Naive thymus-derived CD4-positive, alpha-beta T cell (primary cell): ENCODE measurements at regions of chr10 and their contacts with region 1.

Region 1: DNA sequence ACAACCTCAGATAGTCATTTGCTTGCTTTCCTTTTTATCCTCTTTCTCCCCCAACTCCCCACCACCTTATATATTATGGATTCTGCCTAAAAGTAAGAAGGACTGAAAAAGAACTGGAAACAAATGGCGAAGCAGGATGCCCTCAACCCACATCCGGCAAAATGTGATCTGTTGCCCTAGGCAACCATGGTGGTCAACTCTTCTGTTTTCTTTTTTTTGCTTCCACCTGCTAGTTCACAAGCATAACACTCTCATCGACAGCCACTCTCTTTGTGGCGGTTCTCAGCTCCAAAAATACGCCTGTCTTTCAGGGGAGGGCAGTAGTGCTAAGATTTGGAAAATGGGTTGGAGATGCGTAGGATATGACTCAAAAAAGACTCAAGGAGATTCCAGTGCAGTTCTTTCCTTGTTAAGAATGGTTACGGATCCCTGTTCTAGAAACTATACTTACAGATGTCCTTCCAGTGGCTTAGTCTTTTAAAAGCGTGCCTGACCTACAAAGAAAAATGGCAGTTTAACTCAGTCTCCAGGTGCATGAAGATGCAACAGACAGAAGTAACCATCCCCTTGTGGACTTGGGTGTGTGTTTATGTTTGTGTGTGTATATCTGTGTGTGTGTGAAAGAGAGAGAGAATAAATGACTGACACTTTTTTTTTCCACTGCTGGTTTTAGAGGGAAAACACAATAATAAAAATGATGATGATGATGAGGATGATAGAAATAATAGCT is 10.7 kb downstream of the APBB1IP start:
- DNase-seq: peak; percentile 23 to 91 (median 89)
- ATAC-seq: peak; percentile 89
- H3K4me3 ChIP-seq: peak overlapping the region; percentile 31
- H3K4me3 Mint-ChIP-seq: peak overlapping the region; percentile 71 to 92 (median 84)
- H3K27ac ChIP-seq: peak overlapping the region; percentile 76
- H3K27ac Mint-ChIP-seq: peak overlapping the region; percentile 93 to 99 (median 97)
- H3K4me1 ChIP-seq: peaks cover 57 to 70% of the 10 kb centered on the region in 2 donors
- H3K4me1 Mint-ChIP-seq: peaks cover 60 to 97% (median 90%) of the 10 kb centered on the region in 7 donors
- H3K27me3 ChIP-seq: no peaks in the 10 kb centered on the region
- H3K27me3 Mint-ChIP-seq: no peaks in the 10 kb centered on the region

Region 2: DNA sequence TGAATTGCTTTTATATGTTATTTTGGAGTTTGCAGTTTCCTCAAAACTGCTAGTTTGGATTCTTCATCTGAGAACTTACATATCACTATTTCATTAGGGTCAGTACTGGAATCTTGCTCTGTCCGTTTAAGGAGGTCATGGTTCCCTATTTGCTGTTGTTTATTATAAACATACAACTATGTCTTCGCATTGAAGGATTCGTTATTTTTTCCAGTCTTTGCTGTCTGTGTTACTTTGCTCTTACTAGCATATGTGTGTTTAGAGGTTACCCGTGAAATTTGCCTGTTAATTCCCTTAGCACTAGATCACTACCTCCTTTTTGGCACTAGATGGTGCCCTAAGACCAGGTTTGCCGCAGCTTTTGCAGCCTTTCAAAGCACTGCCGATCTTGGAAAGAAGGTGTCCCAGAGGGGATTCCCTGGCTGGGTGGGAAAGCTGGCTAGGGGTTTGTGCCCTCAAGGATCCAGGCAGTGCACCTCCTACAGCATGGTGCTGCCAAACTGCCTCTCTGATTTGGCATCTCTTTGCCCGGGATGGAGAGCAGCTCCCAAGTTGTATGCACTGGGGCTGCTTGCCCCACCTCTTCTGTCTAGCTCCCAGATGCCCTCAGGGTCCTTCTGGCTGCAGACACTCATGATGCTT is 113.8 kb before region 1 on chr10:
- CTCF ChIA-PET with region 1: no interaction called
- POLR2A ChIA-PET with region 1: interaction called, 3 read pairs
- intact Hi-C with region 1: loop called in 1 of 2 experiments (anchors 1 kb)
- DNase-seq: peak; percentile 46 to 78 (median 70)
- ATAC-seq: peak; percentile 93
- H3K4me3 ChIP-seq: peak overlapping the region; percentile 43
- H3K4me3 Mint-ChIP-seq: peak overlapping the region; percentile 53 to 92 (median 86)
- H3K27ac ChIP-seq: no peak overlapping the region
- H3K27ac Mint-ChIP-seq: peak overlapping the region in 7 of 9 donors; percentile 2 to 83 (median 60)
- H3K4me1 ChIP-seq: no peaks in the 10 kb centered on the region
- H3K4me1 Mint-ChIP-seq: peaks cover 0 to 12% (median 2%) of the 10 kb centered on the region in 7 donors
- H3K27me3 ChIP-seq: no peaks in the 10 kb centered on the region
- H3K27me3 Mint-ChIP-seq: peaks cover 0 to 2% (median 0%) of the 10 kb centered on the region in 5 donors

Region 3: DNA sequence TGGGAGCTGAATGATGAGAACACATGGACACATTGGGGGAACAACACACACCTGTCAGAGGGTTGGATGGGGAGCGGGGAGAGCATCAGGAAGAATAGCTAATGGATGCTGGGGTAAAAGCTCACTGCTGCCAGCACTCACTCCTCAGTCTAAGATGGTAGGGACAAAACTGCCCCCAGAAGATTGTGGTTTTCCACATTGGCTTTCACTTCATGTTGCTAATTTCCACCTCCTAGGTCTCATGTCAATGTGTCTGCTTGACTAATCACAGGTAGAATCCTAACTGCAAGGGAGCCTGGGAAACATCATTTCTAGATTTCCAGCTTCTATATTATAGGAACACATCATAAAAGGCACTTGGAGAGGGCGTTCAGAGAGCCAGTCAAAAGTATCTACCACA is 11.9 kb after region 1 on chr10:
- CTCF ChIA-PET with region 1: no interaction called
- POLR2A ChIA-PET with region 1: interaction called, 4 read pairs
- intact Hi-C with region 1: loop called in 1 of 2 experiments (anchors 1 kb)
- DNase-seq: no peak
- ATAC-seq: no peak
- H3K4me3 ChIP-seq: no peak overlapping the region
- H3K4me3 Mint-ChIP-seq: no peak overlapping the region
- H3K27ac ChIP-seq: no peak overlapping the region
- H3K27ac Mint-ChIP-seq: peak overlapping the region in 5 of 9 donors; percentile 14 to 83 (median 51)
- H3K4me1 ChIP-seq: peaks cover 27 to 33% of the 10 kb centered on the region in 2 donors
- H3K4me1 Mint-ChIP-seq: peaks cover 44 to 84% (median 78%) of the 10 kb centered on the region in 7 donors
- H3K27me3 ChIP-seq: no peaks in the 10 kb centered on the region
- H3K27me3 Mint-ChIP-seq: no peaks in the 10 kb centered on the region

Region 4: DNA sequence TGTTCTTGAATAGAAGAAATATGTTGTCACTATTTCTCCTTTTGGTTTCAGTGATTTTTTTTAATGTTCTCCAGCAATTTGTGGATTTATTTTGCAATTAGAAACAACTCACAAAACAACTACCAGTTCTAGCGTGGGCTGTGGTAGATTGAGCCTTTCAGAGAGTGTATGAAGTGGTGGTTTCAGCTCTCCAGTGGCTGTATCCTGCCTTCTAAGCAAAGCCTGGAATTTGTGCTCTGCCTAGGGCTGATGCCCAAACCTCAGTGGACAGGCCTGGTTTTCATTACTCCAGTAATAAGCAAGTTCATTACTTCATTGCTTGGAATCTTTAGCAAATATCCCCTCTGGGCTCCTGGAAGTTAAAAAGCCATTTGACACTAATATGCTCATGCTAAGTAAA is 25.2 kb after region 1 on chr10:
- CTCF ChIA-PET with region 1: interaction called, 3 read pairs
- POLR2A ChIA-PET with region 1: interaction called, 9 read pairs
- intact Hi-C with region 1: loop called in 1 of 2 experiments (anchors 1 kb)
- DNase-seq: no peak
- ATAC-seq: peak; percentile 35
- H3K4me3 ChIP-seq: no peak overlapping the region
- H3K4me3 Mint-ChIP-seq: peak overlapping the region in 9 of 10 donors; percentile 59 to 86 (median 71)
- H3K27ac ChIP-seq: peak overlapping the region; percentile 68
- H3K27ac Mint-ChIP-seq: peak overlapping the region; percentile 85 to 98 (median 95)
- H3K4me1 ChIP-seq: peaks cover 84 to 87% of the 10 kb centered on the region in 2 donors
- H3K4me1 Mint-ChIP-seq: peaks cover 70 to 97% (median 86%) of the 10 kb centered on the region in 7 donors
- H3K27me3 ChIP-seq: no peaks in the 10 kb centered on the region
- H3K27me3 Mint-ChIP-seq: no peaks in the 10 kb centered on the region

Region 5: GRCh38 chr10:26486991-26487850 is 38.4 kb after region 1 on chr10:
- CTCF ChIA-PET with region 1: no interaction called
- POLR2A ChIA-PET with region 1: interaction called, 11 read pairs
- intact Hi-C with region 1: loop called (anchors 1 kb)
- DNase-seq: peak in 8 of 9 donors; percentile 50 to 86 (median 66)
- ATAC-seq: peak; percentile 85
- H3K4me3 ChIP-seq: peak overlapping the region; percentile 43
- H3K4me3 Mint-ChIP-seq: peak overlapping the region; percentile 8 to 83 (median 74)
- H3K27ac ChIP-seq: peak overlapping the region; percentile 84
- H3K27ac Mint-ChIP-seq: peak overlapping the region; percentile 90 to 97 (median 94)
- H3K4me1 ChIP-seq: peaks cover 56 to 64% of the 10 kb centered on the region in 2 donors
- H3K4me1 Mint-ChIP-seq: peaks cover 57 to 82% (median 74%) of the 10 kb centered on the region in 7 donors
- H3K27me3 ChIP-seq: no peaks in the 10 kb centered on the region
- H3K27me3 Mint-ChIP-seq: no peaks in the 10 kb centered on the region

Region 6: GRCh38 chr10:26682931-26683330 is 234.1 kb after region 1 on chr10:
- CTCF ChIA-PET with region 1: no interaction called
- POLR2A ChIA-PET with region 1: no interaction called
- intact Hi-C with region 1: loop called in 1 of 2 experiments (anchors 2 kb)
- DNase-seq: peak in 7 of 9 donors; percentile 65 to 91 (median 85)
- ATAC-seq: peak; percentile 91
- H3K4me3 ChIP-seq: no peak overlapping the region
- H3K4me3 Mint-ChIP-seq: peak overlapping the region in 9 of 10 donors; percentile 26 to 83 (median 71)
- H3K27ac ChIP-seq: peak overlapping the region; percentile 69
- H3K27ac Mint-ChIP-seq: peak overlapping the region in 8 of 9 donors; percentile 94 to 99 (median 97)
- H3K4me1 ChIP-seq: peaks cover 0 to 33% of the 10 kb centered on the region in 2 donors
- H3K4me1 Mint-ChIP-seq: peaks cover 14 to 63% (median 39%) of the 10 kb centered on the region in 7 donors
- H3K27me3 ChIP-seq: no peaks in the 10 kb centered on the region
- H3K27me3 Mint-ChIP-seq: peaks cover 0 to 9% (median 0%) of the 10 kb centered on the region in 5 donors